Endothelial cell of umbilical vein (primary cell): ENCODE measurements at regions of chr2 and their contacts with region 1.

Region 1: GRCh38 chr2:200405599-200406298 is 99.3 kb downstream of the SPATS2L start:
- DNase-seq: peak; percentile 94
- H3K4me3 ChIP-seq: peak overlapping the region in 1 of 3 experiments; percentile 61
- H3K27ac ChIP-seq: peak overlapping the region; percentile 99
- H3K4me1 ChIP-seq: peaks cover 47% of the 10 kb centered on the region
- H3K27me3 ChIP-seq: no peaks in the 10 kb centered on the region
- CTCF ChIP-seq: no peak
- POLR2A ChIP-seq: peak; percentile 31

Region 2: GRCh38 chr2:200172944-200173581 is 232.7 kb before region 1 on chr2:
- CTCF ChIA-PET with region 1: no interaction called
- POLR2A ChIA-PET with region 1: no interaction called
- dilution Hi-C with region 1: no loop called
- intact Hi-C with region 1: no loop called
- DNase-seq: no peak
- H3K4me3 ChIP-seq: no peak overlapping the region
- H3K27ac ChIP-seq: no peak overlapping the region
- H3K4me1 ChIP-seq: no peaks in the 10 kb centered on the region
- H3K27me3 ChIP-seq: peaks cover 3 to 12% of the 10 kb centered on the region in 2 experiments
- CTCF ChIP-seq: no peak
- POLR2A ChIP-seq: no peak

Region 3: GRCh38 chr2:200306196-200306930 is 99.4 kb before region 1 on chr2 and contains the start of gene SPATS2L:
- CTCF ChIA-PET with region 1: interaction called, 6 read pairs
- POLR2A ChIA-PET with region 1: no interaction called
- dilution Hi-C with region 1: no loop called
- intact Hi-C with region 1: loop called (anchors 1 kb)
- DNase-seq: peak; percentile 71
- H3K4me3 ChIP-seq: peak within 1 kb of the TSS; percentile 83 to 95 (median 93)
- H3K27ac ChIP-seq: peak within 1 kb of the TSS; percentile 39
- H3K4me1 ChIP-seq: peaks cover 14% of the 10 kb centered on the region
- H3K27me3 ChIP-seq: no peaks in the 10 kb centered on the region
- CTCF ChIP-seq: no peak
- POLR2A ChIP-seq: peak; percentile 74
- total RNA-seq, gene SPATS2L: 63.8 and 72.9 TPM in 2 replicates

Region 4: GRCh38 chr2:200356857-200357384 is 48.8 kb before region 1 on chr2:
- CTCF ChIA-PET with region 1: no interaction called
- POLR2A ChIA-PET with region 1: no interaction called
- dilution Hi-C with region 1: no loop called
- intact Hi-C with region 1: no loop called
- DNase-seq: no peak
- H3K4me3 ChIP-seq: no peak overlapping the region
- H3K27ac ChIP-seq: no peak overlapping the region
- H3K4me1 ChIP-seq: no peaks in the 10 kb centered on the region
- H3K27me3 ChIP-seq: no peaks in the 10 kb centered on the region
- CTCF ChIP-seq: no peak
- POLR2A ChIP-seq: no peak

Region 5: GRCh38 chr2:200376513-200377354 is 29.0 kb before region 1 on chr2:
- CTCF ChIA-PET with region 1: interaction called, 9 read pairs
- POLR2A ChIA-PET with region 1: interaction called, 5 read pairs
- dilution Hi-C with region 1: no loop called
- intact Hi-C with region 1: loop called (anchors 1 kb)
- DNase-seq: peak; percentile 89
- H3K4me3 ChIP-seq: no peak overlapping the region
- H3K27ac ChIP-seq: peak overlapping the region; percentile 66
- H3K4me1 ChIP-seq: peaks cover 61% of the 10 kb centered on the region
- H3K27me3 ChIP-seq: no peaks in the 10 kb centered on the region
- CTCF ChIP-seq: no peak
- POLR2A ChIP-seq: no peak

Region 6: GRCh38 chr2:200383383-200384110 is 22.2 kb before region 1 on chr2:
- CTCF ChIA-PET with region 1: interaction called, 9 read pairs
- POLR2A ChIA-PET with region 1: interaction called, 5 read pairs
- dilution Hi-C with region 1: no loop called
- intact Hi-C with region 1: loop called (anchors 1 kb)
- DNase-seq: peak; percentile 83
- H3K4me3 ChIP-seq: peak overlapping the region in 2 of 3 experiments; percentile 29 to 61
- H3K27ac ChIP-seq: peak overlapping the region; percentile 67
- H3K4me1 ChIP-seq: peaks cover 35% of the 10 kb centered on the region
- H3K27me3 ChIP-seq: no peaks in the 10 kb centered on the region
- CTCF ChIP-seq: no peak
- POLR2A ChIP-seq: no peak

Region 7: GRCh38 chr2:200428951-200429665 is 23.4 kb after region 1 on chr2:
- CTCF ChIA-PET with region 1: no interaction called
- POLR2A ChIA-PET with region 1: no interaction called
- dilution Hi-C with region 1: no loop called
- intact Hi-C with region 1: loop called (anchors 2 kb)
- DNase-seq: no peak
- H3K4me3 ChIP-seq: no peak overlapping the region
- H3K27ac ChIP-seq: no peak overlapping the region
- H3K4me1 ChIP-seq: peaks cover 7% of the 10 kb centered on the region
- H3K27me3 ChIP-seq: no peaks in the 10 kb centered on the region
- CTCF ChIP-seq: no peak
- POLR2A ChIP-seq: no peak

Region 8: GRCh38 chr2:200787348-200788120 is 381.8 kb after region 1 on chr2:
- CTCF ChIA-PET with region 1: no interaction called
- POLR2A ChIA-PET with region 1: interaction called, 4 read pairs
- dilution Hi-C with region 1: no loop called
- intact Hi-C with region 1: loop called (anchors 10 kb)
- DNase-seq: peak; percentile 95
- H3K4me3 ChIP-seq: peak overlapping the region in 1 of 3 experiments; percentile 63
- H3K27ac ChIP-seq: peak overlapping the region; percentile 99
- H3K4me1 ChIP-seq: peaks cover 43% of the 10 kb centered on the region
- H3K27me3 ChIP-seq: no peaks in the 10 kb centered on the region
- CTCF ChIP-seq: no peak
- POLR2A ChIP-seq: peak; percentile 17